ENCODE measurements at regions of chr3 and their contacts with region 1.

Region 1: DNA sequence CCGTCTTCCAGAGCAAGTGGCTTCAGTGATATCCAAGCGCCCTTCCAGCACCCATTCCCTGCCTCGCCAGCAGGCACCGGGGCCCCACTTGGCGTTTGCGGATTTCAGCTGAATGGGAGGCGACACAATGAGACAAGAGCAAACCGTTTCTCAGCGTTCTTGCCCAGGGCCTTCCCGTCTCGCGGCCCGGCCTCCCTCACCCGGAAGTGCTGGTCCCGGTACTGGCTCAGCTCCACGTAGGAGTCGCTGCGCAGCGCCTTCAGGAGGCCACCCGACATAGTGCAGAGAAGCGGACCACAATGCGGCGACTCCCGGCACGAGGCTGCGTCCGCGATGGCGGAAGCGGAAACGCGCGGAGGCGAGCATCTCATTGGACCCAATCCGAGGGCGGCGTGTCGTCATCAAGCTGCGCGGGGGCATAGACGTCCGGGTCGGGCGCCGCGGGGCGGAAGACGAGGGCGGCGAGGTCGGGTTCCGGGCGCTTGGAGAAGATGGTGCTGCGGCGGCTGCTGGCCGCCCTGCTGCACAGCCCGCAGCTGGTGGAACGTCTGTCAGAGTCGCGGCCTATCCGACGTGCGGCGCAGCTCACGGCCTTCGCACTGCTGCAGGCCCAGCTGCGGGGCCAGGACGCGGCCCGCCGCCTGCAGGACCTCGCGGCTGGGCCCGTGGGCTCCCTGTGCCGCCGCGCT is at the start of gene NCBP2:
- DNase-seq: peak; percentile 100
- ATAC-seq: peak; percentile 99
- H3K4me3 ChIP-seq: peak within 1 kb of the TSS; percentile 52 to 77
- H3K27ac ChIP-seq: peak within 1 kb of the TSS; percentile 10 to 87
- H3K4me1 ChIP-seq: no peaks in the 10 kb centered on the region
- H3K27me3 ChIP-seq: no peaks in the 10 kb centered on the region
- total RNA-seq, gene NCBP2: 42.0 to 48.1 TPM

Region 2: DNA sequence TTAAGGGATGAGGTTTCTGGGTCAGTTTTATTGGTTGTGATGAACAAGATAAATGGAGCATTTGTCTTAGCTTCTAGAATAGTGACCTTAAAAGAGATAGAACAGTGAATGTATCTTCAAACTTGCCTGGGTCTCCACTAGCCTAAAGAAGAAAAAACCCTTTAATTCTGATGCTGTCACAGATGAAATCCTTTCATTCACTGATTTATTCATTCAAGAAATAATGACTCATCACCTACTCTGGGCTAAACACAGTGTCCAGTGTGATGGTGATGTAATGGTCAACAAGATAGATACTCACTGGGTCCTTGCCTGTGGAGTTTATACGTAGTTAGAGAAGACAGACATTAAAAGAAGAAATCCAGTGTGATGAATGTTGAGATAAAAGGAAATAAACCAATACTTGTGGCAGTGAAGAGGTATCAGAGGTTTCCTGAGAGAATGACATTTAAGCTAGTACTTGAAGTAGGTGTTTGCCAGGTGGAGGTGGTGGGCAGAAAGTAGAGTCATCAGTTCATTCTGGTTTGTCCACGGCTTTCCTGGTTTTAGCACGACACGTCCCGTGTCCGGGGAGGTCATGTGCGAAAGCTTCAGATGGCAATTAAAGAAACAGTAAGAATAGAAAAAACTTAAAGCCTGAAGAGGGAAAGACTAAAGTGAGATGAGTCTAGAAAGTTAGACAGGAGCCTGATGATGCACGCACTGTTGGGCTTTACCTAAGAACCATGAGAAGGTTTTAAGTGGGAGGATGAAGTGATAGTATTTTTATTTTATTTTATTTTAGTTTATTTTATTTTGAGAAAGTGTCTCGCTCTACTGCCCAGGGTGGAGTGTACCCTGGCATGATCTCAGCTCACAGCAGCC is 184.3 kb before region 1 on chr3:
- intact Hi-C with region 1: loop called in 1 of 2 experiments (anchors 10 kb)
- DNase-seq: no peak
- ATAC-seq: no peak
- H3K4me3 ChIP-seq: no peak overlapping the region
- H3K27ac ChIP-seq: no peak overlapping the region
- H3K4me1 ChIP-seq: peaks cover 0 to 3% of the 10 kb centered on the region in 2 donors
- H3K27me3 ChIP-seq: no peaks in the 10 kb centered on the region

Region 3: GRCh38 chr3:196867507-196868296 is 74.7 kb before region 1 on chr3 and contains the start of gene SENP5:
- intact Hi-C with region 1: loop called in 1 of 2 experiments (anchors 5 kb)
- DNase-seq: peak; percentile 94 to 97
- ATAC-seq: peak; percentile 99
- H3K4me3 ChIP-seq: peak within 1 kb of the TSS; percentile 80 to 98
- H3K27ac ChIP-seq: peak within 1 kb of the TSS; percentile 23 to 92
- H3K4me1 ChIP-seq: no peaks in the 10 kb centered on the region
- H3K27me3 ChIP-seq: no peaks in the 10 kb centered on the region
- total RNA-seq, gene SENP5: 40.3 to 42.8 TPM